Sigmoid colon (tissue), 7 donors: ENCODE measurements at regions of chr12 and their contacts with region 1.

Region 1: DNA sequence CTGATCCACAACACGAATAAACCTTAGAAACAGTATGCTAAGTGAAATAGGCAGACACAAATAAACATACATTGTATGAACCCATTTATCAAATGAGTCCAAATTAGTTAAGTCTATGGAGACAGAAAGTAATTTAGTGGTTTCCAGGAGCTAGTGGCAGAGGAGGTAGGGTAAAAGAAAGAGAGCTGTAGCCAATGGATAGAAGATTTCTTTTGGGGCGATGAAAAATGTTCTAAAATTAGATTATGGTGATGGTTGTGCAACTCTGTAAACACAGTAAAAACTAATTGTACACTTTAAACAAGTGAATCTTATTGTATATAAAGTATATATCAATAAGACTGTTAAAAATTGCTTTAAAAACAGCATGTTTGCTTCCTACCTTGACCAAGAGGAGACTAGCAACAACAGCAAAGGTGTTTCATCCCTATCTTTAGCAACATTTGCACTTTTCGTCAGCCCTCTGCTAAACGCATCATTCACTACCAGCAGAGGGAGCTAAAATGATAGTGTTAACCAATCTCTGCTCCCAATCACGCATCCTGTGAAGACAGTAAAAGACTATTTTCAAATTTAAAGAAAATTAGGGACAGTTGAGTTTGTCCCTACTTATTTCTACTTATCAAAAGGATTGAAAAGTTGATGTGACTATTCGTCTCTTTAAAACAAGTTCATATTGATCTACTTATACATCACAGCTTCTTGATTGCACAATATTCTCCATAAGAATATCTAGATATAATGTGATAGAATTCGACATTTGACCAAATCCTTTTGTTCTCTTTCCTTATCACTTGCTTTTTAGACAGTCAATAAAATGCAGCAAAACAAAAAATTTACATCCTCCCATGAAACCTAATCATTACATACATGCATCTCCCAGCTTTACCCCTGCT is 24.0 kb upstream of the LGR5 start:
- DNase-seq: no peak
- H3K4me3 ChIP-seq: no peak overlapping the region
- H3K27ac ChIP-seq: no peak overlapping the region
- H3K4me1 ChIP-seq: no peaks in the 10 kb centered on the region
- H3K27me3 ChIP-seq: no peaks in the 10 kb centered on the region
- CTCF ChIP-seq: peak in 3 of 4 experiments; percentile 43 to 72 (median 57)
- EP300 ChIP-seq: no peak
- POLR2A ChIP-seq: no peak

Region 2: DNA sequence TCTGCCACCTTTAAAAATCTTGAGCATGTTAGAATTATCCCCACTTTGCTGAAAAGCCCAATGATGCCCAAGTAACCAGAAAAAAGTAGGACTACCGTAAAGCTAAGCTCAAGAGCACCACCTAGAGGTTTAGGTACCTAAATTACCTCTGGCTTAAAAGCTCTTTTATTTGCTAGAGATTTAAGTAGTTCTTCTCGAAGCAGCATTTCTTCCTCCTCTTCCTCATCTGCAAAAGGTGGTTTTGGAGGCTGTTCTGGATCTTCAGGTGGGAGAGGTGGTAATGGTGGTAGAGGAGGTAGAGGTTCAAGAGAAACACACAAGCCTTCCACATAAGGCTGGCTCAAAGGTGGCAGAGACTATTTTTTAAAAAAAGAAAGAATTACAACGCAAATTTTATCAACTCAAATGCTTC is 221.1 kb after region 1 on chr12:
- intact Hi-C with region 1: loop called (anchors 5 kb)
- DNase-seq: no peak
- H3K4me3 ChIP-seq: no peak overlapping the region
- H3K27ac ChIP-seq: no peak overlapping the region
- H3K4me1 ChIP-seq: no peaks in the 10 kb centered on the region
- H3K27me3 ChIP-seq: no peaks in the 10 kb centered on the region
- CTCF ChIP-seq: peak in 3 of 4 experiments; percentile 35 to 66 (median 51)
- EP300 ChIP-seq: no peak
- POLR2A ChIP-seq: no peak

Region 3: DNA sequence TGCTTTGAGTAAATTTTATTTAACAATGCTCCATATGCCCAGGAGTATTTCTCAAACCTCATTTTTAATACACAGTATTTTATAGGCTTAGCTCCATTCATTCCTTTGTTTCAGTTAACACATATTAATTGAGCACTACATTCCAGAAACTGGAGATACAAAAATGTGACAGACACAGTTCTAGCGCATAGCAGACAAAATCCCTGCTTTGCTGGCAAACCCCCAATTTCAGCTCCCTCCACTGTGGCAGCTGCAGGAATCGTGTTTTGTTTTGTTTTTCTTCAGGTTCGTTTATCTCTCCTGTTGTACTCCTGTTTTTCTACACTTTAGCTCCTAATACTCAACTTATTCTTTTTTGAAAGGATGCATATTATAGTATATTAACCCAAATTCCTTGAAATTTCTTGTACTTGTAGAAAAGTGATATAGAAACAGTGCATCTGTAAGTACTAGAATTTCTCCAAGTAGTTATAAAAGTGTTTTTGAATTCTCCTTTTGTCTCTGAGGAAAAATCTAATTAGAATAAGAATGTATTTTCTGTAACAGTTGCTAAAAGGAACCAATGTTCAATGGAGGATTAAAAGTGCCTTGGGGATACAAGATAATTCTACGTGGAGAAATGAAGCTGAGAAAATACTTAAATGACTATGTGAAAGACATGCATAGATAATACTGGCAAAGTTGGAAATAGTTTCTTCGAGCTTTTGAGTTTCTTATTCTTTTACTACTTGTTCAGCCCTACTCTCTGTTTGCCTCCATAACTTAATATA is 332.7 kb after region 1 on chr12:
- intact Hi-C with region 1: loop called (anchors 2 kb)
- DNase-seq: no peak
- H3K4me3 ChIP-seq: no peak overlapping the region
- H3K27ac ChIP-seq: no peak overlapping the region
- H3K4me1 ChIP-seq: no peaks in the 10 kb centered on the region
- H3K27me3 ChIP-seq: peaks cover 0 to 5% (median 0%) of the 10 kb centered on the region in 3 donors
- CTCF ChIP-seq: no peak
- EP300 ChIP-seq: no peak
- POLR2A ChIP-seq: no peak

Region 4: GRCh38 chr12:71768900-71769299 is 353.3 kb after region 1 on chr12:
- intact Hi-C with region 1: no loop called
- DNase-seq: no peak
- H3K4me3 ChIP-seq: no peak overlapping the region
- H3K27ac ChIP-seq: no peak overlapping the region
- H3K4me1 ChIP-seq: peaks cover 0 to 38% (median 20%) of the 10 kb centered on the region in 4 donors
- H3K27me3 ChIP-seq: no peaks in the 10 kb centered on the region
- CTCF ChIP-seq: no peak
- EP300 ChIP-seq: no peak
- POLR2A ChIP-seq: no peak